GM12878 (cell line): ENCODE measurements at regions of chr3 and their contacts with region 1.

Region 1: GRCh38 chr3:152444029-152444641 is 175.4 kb downstream of the MBNL1 start:
- DNase-seq: peak; percentile 33
- ATAC-seq: peak; percentile 75
- H3K4me3 ChIP-seq: no peak overlapping the region
- H3K27ac ChIP-seq: no peak overlapping the region; the same call in 1 of the 2 replicates
- H3K4me1 ChIP-seq: peaks cover 13% of the 10 kb centered on the region; the same call in 1 of the 2 replicates
- H3K27me3 ChIP-seq: no peaks in the 10 kb centered on the region
- CTCF ChIP-seq: peak; percentile 48 to 70 (median 59); a peak in 5 of 6 replicates
- EP300 ChIP-seq: no peak
- POLR2A ChIP-seq: no peak
- RAD21 ChIP-seq: peak; percentile 91

Region 2: GRCh38 chr3:152071924-152072323 is 372.2 kb before region 1 on chr3:
- CTCF ChIA-PET with region 1: interaction called, 68 read pairs
- POLR2A ChIA-PET with region 1: no interaction called
- RAD21 ChIA-PET with region 1: interaction called, 86 read pairs
- SMC1A ChIA-PET with region 1: interaction called, 70 read pairs
- in situ Hi-C with region 1: loop called (anchors 5 kb)
- intact Hi-C with region 1: loop called (anchors 1 kb)
- DNase-seq: no peak
- ATAC-seq: peak; percentile 96
- H3K4me3 ChIP-seq: no peak overlapping the region
- H3K27ac ChIP-seq: no peak overlapping the region
- H3K4me1 ChIP-seq: no peaks in the 10 kb centered on the region
- H3K27me3 ChIP-seq: no peaks in the 10 kb centered on the region
- CTCF ChIP-seq: peak; percentile 47 to 64 (median 60)
- EP300 ChIP-seq: no peak
- POLR2A ChIP-seq: no peak
- RAD21 ChIP-seq: peak; percentile 53

Region 3: DNA sequence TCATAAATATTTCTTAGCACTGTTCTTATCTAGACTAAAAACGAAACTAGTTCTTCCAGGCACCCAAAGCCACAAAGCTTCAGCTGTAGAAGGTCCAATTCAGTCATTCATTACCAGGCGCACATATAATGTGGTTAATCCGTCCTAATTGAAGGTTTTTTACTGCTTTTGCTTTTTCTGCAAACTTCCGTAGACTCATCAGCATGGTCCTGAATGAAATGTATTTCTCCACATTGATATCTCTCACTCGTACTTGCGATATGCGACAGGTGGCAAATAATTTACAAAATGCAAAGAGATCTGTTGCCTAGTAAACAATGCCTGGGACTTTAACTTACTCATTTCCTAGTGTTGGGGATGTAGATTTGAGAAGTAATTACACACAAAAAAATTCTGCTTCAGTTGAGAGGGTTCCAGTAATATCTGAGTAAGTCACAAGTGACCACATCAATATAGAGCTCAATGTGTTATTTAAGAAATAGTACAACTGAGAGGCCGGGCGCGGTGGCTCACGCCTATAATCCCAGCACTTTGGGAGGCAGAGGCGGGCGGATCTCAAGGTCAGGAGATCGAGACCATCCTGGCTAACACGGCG is 250.4 kb before region 1 on chr3:
- CTCF ChIA-PET with region 1: interaction called, 282 read pairs
- POLR2A ChIA-PET with region 1: no interaction called
- RAD21 ChIA-PET with region 1: interaction called, 10 read pairs
- SMC1A ChIA-PET with region 1: interaction called, 211 read pairs
- in situ Hi-C with region 1: no loop called
- intact Hi-C with region 1: no loop called
- DNase-seq: no peak
- ATAC-seq: peak; percentile 67
- H3K4me3 ChIP-seq: peak overlapping the region; percentile 44; the same call in 1 of the 2 replicates
- H3K27ac ChIP-seq: peak overlapping the region; percentile 48; the same call in 1 of the 2 replicates
- H3K4me1 ChIP-seq: peaks cover 29% of the 10 kb centered on the region
- H3K27me3 ChIP-seq: no peaks in the 10 kb centered on the region
- CTCF ChIP-seq: no peak
- EP300 ChIP-seq: no peak
- POLR2A ChIP-seq: no peak
- RAD21 ChIP-seq: no peak; the same call in 1 of the 2 replicates

Region 4: GRCh38 chr3:152268555-152269425 is 175.3 kb before region 1 on chr3 and contains the start of gene MBNL1:
- CTCF ChIA-PET with region 1: interaction called, 24 read pairs
- POLR2A ChIA-PET with region 1: interaction called, 5 read pairs
- RAD21 ChIA-PET with region 1: interaction called, 24 read pairs
- SMC1A ChIA-PET with region 1: interaction called, 57 read pairs
- in situ Hi-C with region 1: no loop called
- intact Hi-C with region 1: loop called (anchors 5 kb)
- DNase-seq: no peak
- ATAC-seq: peak; percentile 67
- H3K4me3 ChIP-seq: peak within 1 kb of the TSS; percentile 95
- H3K27ac ChIP-seq: peak within 1 kb of the TSS; percentile 90
- H3K4me1 ChIP-seq: peaks cover 10% of the 10 kb centered on the region
- H3K27me3 ChIP-seq: no peaks in the 10 kb centered on the region
- CTCF ChIP-seq: no peak
- EP300 ChIP-seq: no peak
- POLR2A ChIP-seq: peak; percentile 96
- RAD21 ChIP-seq: no peak
- polyA plus RNA-seq, gene MBNL1: 59.6 to 73.3 TPM

Region 5: DNA sequence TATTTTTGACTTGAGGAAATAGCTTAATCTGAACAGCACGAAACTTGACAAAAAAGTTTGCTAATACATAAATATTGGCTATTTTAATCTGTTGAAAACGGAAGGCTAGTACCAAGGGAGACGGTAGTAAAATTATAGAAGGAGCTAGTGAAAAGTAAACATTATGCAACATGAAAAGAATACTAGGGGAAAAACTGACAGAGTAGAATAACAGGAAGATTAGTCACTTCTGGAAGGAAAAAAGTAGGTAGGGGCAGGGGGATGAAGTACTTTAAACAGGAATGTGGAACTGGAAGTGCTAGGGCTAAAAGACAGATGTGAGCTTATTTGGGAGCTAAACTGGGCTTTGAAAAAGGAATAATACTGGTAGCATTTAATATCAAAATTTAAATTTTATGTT is 115.3 kb before region 1 on chr3:
- CTCF ChIA-PET with region 1: interaction called, 11 read pairs
- POLR2A ChIA-PET with region 1: no interaction called
- RAD21 ChIA-PET with region 1: interaction called, 6 read pairs
- SMC1A ChIA-PET with region 1: interaction called, 12 read pairs
- in situ Hi-C with region 1: no loop called
- intact Hi-C with region 1: no loop called
- DNase-seq: no peak
- ATAC-seq: no peak
- H3K4me3 ChIP-seq: no peak overlapping the region
- H3K27ac ChIP-seq: no peak overlapping the region; the same call in 1 of the 2 replicates
- H3K4me1 ChIP-seq: peaks cover 24% of the 10 kb centered on the region
- H3K27me3 ChIP-seq: no peaks in the 10 kb centered on the region
- CTCF ChIP-seq: no peak
- EP300 ChIP-seq: no peak
- POLR2A ChIP-seq: no peak
- RAD21 ChIP-seq: no peak

Region 6: GRCh38 chr3:152392272-152392880 is 51.8 kb before region 1 on chr3:
- CTCF ChIA-PET with region 1: interaction called, 11 read pairs
- POLR2A ChIA-PET with region 1: no interaction called
- RAD21 ChIA-PET with region 1: interaction called, 4 read pairs
- SMC1A ChIA-PET with region 1: interaction called, 16 read pairs
- in situ Hi-C with region 1: no loop called
- intact Hi-C with region 1: no loop called
- DNase-seq: no peak
- ATAC-seq: no peak
- H3K4me3 ChIP-seq: no peak overlapping the region
- H3K27ac ChIP-seq: no peak overlapping the region
- H3K4me1 ChIP-seq: no peaks in the 10 kb centered on the region
- H3K27me3 ChIP-seq: no peaks in the 10 kb centered on the region
- CTCF ChIP-seq: no peak
- EP300 ChIP-seq: no peak
- POLR2A ChIP-seq: no peak
- RAD21 ChIP-seq: no peak

Region 7: DNA sequence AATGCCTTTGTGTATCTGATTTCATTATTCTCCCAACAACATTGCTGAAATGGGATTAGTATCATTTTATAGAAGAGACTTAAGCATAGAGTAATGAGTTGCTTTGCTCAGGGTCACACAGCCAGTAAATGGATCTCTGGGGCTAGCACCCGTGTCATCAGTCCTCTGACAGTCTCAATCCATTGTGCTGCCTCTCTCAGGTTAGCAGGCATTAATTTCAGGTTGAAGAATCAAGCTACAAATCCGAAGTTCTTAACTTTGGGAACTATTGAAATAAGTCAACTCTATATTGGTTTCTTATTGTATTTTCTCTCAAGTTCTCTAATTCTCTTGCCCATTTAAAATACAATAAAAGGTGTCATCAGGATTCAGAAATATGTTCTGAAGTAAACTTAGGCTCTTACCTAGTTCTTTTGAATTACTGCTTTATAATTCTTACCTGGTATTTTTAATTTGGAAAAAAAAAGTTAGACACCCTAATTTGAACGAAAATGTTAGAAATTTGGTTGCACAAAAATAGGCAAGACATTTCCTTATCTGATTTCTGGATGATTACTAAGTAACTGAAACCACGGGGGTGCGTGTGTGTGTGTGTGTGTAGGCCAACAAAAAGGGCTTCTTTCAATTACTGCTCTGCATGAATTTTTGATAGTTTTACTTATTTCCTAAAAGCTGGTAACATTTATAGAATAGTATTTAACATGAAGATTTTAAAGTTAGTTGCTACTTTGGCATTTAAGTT is 14.4 kb after region 1 on chr3:
- CTCF ChIA-PET with region 1: interaction called, 11 read pairs
- POLR2A ChIA-PET with region 1: interaction called, 3 read pairs
- RAD21 ChIA-PET with region 1: interaction called, 4 read pairs
- SMC1A ChIA-PET with region 1: interaction called, 9 read pairs
- in situ Hi-C with region 1: no loop called
- intact Hi-C with region 1: no loop called
- DNase-seq: no peak
- ATAC-seq: no peak
- H3K4me3 ChIP-seq: no peak overlapping the region
- H3K27ac ChIP-seq: no peak overlapping the region
- H3K4me1 ChIP-seq: no peaks in the 10 kb centered on the region
- H3K27me3 ChIP-seq: no peaks in the 10 kb centered on the region
- CTCF ChIP-seq: no peak
- EP300 ChIP-seq: no peak
- POLR2A ChIP-seq: no peak
- RAD21 ChIP-seq: no peak

Region 8: GRCh38 chr3:152785051-152785450 is 340.9 kb after region 1 on chr3:
- CTCF ChIA-PET with region 1: no interaction called
- POLR2A ChIA-PET with region 1: no interaction called
- RAD21 ChIA-PET with region 1: no interaction called
- SMC1A ChIA-PET with region 1: no interaction called
- in situ Hi-C with region 1: no loop called
- intact Hi-C with region 1: no loop called
- DNase-seq: no peak
- ATAC-seq: peak; percentile 81
- H3K4me3 ChIP-seq: no peak overlapping the region
- H3K27ac ChIP-seq: no peak overlapping the region
- H3K4me1 ChIP-seq: peaks cover 7% of the 10 kb centered on the region
- H3K27me3 ChIP-seq: no peaks in the 10 kb centered on the region
- CTCF ChIP-seq: no peak
- EP300 ChIP-seq: no peak
- POLR2A ChIP-seq: no peak
- RAD21 ChIP-seq: no peak